Mammary epithelial cell (primary cell): ENCODE measurements at regions of chr9 and their contacts with region 1.

Region 1: DNA sequence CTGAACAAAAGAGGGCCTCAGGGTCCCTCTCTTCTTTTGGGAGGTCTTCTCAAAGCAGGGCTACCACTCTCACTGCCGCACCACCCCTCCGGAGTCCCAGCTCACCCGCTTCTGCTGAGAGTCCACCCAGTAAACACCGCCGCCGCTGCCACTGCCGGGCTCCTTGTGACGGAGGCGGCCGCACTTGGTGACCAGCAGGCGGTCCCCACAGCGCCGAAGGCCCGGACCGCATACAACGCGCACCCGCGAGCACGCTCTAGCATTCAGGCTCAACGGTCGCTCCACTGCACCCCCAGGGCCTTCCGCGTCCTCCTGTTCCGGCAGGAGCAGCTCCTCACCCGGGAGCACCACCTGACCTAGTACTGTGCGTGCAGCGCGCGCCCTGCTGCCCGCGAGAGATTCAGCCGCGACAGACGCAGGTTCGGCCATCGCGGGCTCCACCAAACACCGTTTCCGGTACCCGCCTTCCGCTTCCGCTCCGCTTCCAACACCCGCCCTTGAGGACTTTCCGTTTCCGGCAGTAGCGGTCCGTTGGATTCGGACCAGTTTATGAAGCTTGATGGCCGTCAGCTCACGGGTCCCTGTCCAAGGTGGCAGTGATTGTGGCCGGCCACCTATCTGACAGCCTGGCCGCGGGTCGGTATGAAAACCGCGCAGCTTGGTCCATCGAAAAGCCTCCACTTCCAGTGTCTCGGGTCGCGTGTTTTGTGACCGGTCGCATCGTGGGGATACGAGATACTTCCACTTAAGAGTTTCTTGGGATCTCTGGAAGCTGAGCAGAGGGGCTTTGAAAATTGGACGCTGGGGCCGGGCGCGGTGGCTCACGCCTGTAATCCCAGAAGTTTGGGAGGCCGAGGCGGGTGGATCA is at the start of gene EXOSC3:
- DNase-seq: peak; percentile 92
- H3K4me3 ChIP-seq: peak within 1 kb of the TSS; percentile 81 to 97 (median 86)
- H3K27ac ChIP-seq: peak within 1 kb of the TSS; percentile 60
- H3K4me1 ChIP-seq: peaks cover 11% of the 10 kb centered on the region
- H3K27me3 ChIP-seq: no peaks in the 10 kb centered on the region
- CTCF ChIP-seq: peak; percentile 9 to 24
- total RNA-seq, gene EXOSC3: 24.7 to 46.5 TPM

Region 2: GRCh38 chr9:37582548-37583157 is 202.2 kb before region 1 on chr9:
- CTCF ChIA-PET with region 1: no interaction called
- dilution Hi-C with region 1: no loop called
- in situ Hi-C with region 1: loop called in 1 of 2 experiments (anchors 25 kb)
- intact Hi-C with region 1: loop called (anchors 5 kb)
- DNase-seq: peak; percentile 42
- H3K4me3 ChIP-seq: no peak overlapping the region
- H3K27ac ChIP-seq: no peak overlapping the region
- H3K4me1 ChIP-seq: no peaks in the 10 kb centered on the region
- H3K27me3 ChIP-seq: no peaks in the 10 kb centered on the region
- CTCF ChIP-seq: peak; percentile 66 to 73

Region 3: GRCh38 chr9:37592108-37592951 is 192.5 kb before region 1 on chr9 and contains the start of gene TOMM5:
- CTCF ChIA-PET with region 1: no interaction called
- dilution Hi-C with region 1: no loop called
- in situ Hi-C with region 1: loop called in 1 of 2 experiments (anchors 25 kb)
- intact Hi-C with region 1: no loop called
- DNase-seq: peak; percentile 90
- H3K4me3 ChIP-seq: peak within 1 kb of the TSS; percentile 95 to 98 (median 98)
- H3K27ac ChIP-seq: peak within 1 kb of the TSS; percentile 88
- H3K4me1 ChIP-seq: peaks cover 25% of the 10 kb centered on the region
- H3K27me3 ChIP-seq: no peaks in the 10 kb centered on the region
- CTCF ChIP-seq: no peak
- total RNA-seq, gene TOMM5: 69.7 to 135 TPM

Region 4: DNA sequence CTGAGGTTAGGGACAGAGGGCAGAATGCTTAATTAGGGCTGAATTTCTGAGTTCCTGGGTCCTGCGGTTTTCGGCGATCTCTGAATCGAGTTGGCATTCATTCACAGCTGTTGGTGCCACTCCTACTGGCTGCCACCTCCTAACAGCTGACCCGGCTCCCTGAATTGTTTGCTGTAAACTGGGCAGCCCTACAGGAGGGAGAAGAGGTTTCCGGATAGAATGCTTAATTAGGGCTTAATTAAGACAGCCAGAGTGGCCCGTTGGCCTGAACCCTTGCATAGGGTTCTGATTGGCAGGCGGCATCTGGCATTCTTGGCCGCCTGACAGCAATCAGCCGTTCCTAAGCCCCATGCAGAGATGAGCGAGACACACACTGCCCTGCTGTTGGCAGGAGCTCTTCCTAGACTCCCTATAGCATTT is 108.4 kb before region 1 on chr9:
- CTCF ChIA-PET with region 1: no interaction called
- dilution Hi-C with region 1: no loop called
- in situ Hi-C with region 1: loop called in 1 of 2 experiments (anchors 25 kb)
- intact Hi-C with region 1: no loop called
- DNase-seq: no peak
- H3K4me3 ChIP-seq: no peak overlapping the region
- H3K27ac ChIP-seq: no peak overlapping the region
- H3K4me1 ChIP-seq: no peaks in the 10 kb centered on the region
- H3K27me3 ChIP-seq: peaks cover 5% of the 10 kb centered on the region
- CTCF ChIP-seq: no peak

Region 5: GRCh38 chr9:37800631-37801286 is 15.9 kb after region 1 on chr9 and contains the start of gene DCAF10:
- CTCF ChIA-PET with region 1: no interaction called
- dilution Hi-C with region 1: no loop called
- in situ Hi-C with region 1: no loop called
- intact Hi-C with region 1: loop called (anchors 1 kb)
- DNase-seq: peak; percentile 88
- H3K4me3 ChIP-seq: peak within 1 kb of the TSS; percentile 83 to 89 (median 87)
- H3K27ac ChIP-seq: peak within 1 kb of the TSS; percentile 60
- H3K4me1 ChIP-seq: peaks cover 9% of the 10 kb centered on the region
- H3K27me3 ChIP-seq: no peaks in the 10 kb centered on the region
- CTCF ChIP-seq: no peak
- total RNA-seq, gene DCAF10: 24.7 to 31.7 TPM

Region 6: GRCh38 chr9:37903647-37904444 is 119.0 kb after region 1 on chr9 and contains the start of gene SLC25A51:
- CTCF ChIA-PET with region 1: no interaction called
- dilution Hi-C with region 1: no loop called
- in situ Hi-C with region 1: no loop called
- intact Hi-C with region 1: loop called (anchors 5 kb)
- DNase-seq: peak; percentile 94
- H3K4me3 ChIP-seq: peak within 1 kb of the TSS; percentile 60 to 83 (median 78)
- H3K27ac ChIP-seq: peak within 1 kb of the TSS; percentile 67
- H3K4me1 ChIP-seq: peaks cover 25% of the 10 kb centered on the region
- H3K27me3 ChIP-seq: no peaks in the 10 kb centered on the region
- CTCF ChIP-seq: peak; percentile 92 to 98
- total RNA-seq, gene SLC25A51: 30.0 to 78.0 TPM